RWPE1 (cell line): ENCODE measurements at regions of chr4 and their contacts with region 1.

Region 1: DNA sequence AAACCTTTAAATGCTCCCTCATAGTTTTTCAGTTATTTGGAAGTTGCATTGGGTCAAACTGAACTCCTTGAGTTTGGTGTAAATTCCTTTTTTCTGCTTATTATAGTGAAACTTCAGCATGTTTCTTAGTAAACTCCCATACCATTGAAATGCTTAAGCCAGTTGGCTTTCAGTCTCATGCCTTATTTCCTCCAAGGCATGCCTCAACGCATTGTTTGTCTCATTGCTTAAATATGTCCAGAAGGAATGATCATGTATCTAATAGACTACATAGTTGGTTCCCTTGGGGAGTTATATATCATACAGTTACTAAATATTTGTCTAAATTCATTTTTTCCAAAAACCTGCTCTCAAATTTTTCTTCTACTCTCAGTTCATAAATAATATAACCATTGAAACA is 114.0 kb downstream of the STOX2 start:
- DNase-seq: peak; percentile 63
- H3K27ac ChIP-seq: no peak overlapping the region
- CTCF ChIP-seq: no peak

Region 2: DNA sequence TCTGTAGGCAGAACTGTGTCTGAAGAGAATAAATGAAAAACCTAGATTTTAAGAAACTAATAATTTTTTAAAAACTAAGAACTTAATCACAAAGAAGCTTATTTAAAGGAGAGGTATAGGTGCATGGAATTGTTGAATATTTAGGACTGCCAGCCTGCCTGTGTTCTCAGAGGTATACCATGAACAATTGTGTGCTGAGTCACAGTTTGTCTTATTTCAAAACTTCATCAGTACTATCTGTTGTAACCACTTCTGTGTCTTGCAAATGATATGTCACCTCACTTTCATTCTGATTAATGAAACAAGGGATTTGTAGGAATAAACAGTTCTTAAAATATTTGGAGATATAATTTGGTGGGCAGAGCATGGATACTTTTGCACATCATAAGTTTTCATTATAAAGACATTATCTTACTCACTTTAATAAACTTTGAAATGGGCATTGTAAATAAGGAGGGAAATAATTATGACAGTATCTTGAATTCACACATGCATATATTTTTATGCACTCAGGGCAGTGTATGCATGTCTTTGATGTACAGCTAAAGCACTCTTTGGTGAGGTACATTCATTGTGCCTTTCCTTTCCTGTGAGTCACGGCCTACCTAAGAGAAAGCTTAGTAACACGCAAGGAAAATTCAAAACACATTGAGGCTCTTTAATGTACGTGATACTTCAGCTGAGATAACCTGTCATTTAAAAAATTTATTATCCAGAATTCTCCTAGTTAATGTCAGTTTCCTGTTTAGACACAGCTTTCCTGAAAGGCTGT is 82.3 kb before region 1 on chr4:
- CTCF ChIA-PET with region 1: interaction called, 10 read pairs
- POLR2A ChIA-PET with region 1: no interaction called
- DNase-seq: peak; percentile 15
- H3K27ac ChIP-seq: no peak overlapping the region
- CTCF ChIP-seq: no peak

Region 3: GRCh38 chr4:184104419-184105101 is 85.5 kb after region 1 on chr4:
- CTCF ChIA-PET with region 1: no interaction called
- POLR2A ChIA-PET with region 1: no interaction called
- DNase-seq: no peak
- H3K27ac ChIP-seq: no peak overlapping the region
- CTCF ChIP-seq: no peak